ENCODE measurements at regions of chr14 and their contacts with region 1.

Region 1: DNA sequence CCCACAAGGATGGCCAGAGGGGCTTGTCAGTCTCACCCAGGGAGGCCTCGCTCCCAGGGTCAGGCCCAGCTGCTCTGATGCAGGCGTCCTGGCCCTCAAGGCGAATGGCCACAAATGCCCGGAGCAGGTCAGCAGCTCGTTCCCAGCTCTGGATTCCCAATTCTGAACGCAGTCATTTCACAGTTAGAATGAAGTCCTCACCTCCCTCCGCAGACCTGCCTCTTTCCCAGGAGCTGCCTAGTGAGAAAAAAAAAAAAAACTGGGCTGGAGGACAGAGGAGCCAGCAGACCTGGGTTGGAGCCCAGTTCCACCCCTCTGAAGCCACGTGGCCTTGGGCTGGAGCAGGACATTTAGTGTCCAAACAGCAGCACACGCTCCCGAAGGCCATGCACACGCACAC is 62.2 kb upstream of the DIO3 start:
- DNase-seq: no peak
- H3K4me3 Mint-ChIP-seq: no peak overlapping the region
- H3K27ac Mint-ChIP-seq: no peak overlapping the region
- H3K4me1 Mint-ChIP-seq: no peaks in the 10 kb centered on the region
- H3K27me3 Mint-ChIP-seq: peaks cover 9% of the 10 kb centered on the region

Region 2: GRCh38 chr14:100692859-100693558 is 806.1 kb before region 1 on chr14:
- CTCF ChIA-PET with region 1: no interaction called
- POLR2A ChIA-PET with region 1: no interaction called
- intact Hi-C with region 1: no loop called
- DNase-seq: no peak
- H3K4me3 Mint-ChIP-seq: no peak overlapping the region
- H3K27ac Mint-ChIP-seq: no peak overlapping the region
- H3K4me1 Mint-ChIP-seq: no peaks in the 10 kb centered on the region
- H3K27me3 Mint-ChIP-seq: peaks cover 5% of the 10 kb centered on the region

Region 3: GRCh38 chr14:101480747-101481530 is 18.1 kb before region 1 on chr14:
- CTCF ChIA-PET with region 1: no interaction called
- POLR2A ChIA-PET with region 1: no interaction called
- intact Hi-C with region 1: loop called (anchors 1 kb)
- DNase-seq: no peak
- H3K4me3 Mint-ChIP-seq: no peak overlapping the region
- H3K27ac Mint-ChIP-seq: no peak overlapping the region
- H3K4me1 Mint-ChIP-seq: no peaks in the 10 kb centered on the region
- H3K27me3 Mint-ChIP-seq: peaks cover 32% of the 10 kb centered on the region

Measured in activated CD4-positive, alpha-beta memory T cell treated with anti-CD3 and anti-CD28 coated beads for 36 hours (primary cell).